ENCODE measurements at regions of chr12 and their contacts with region 1.

Region 1: GRCh38 chr12:22443379-22444316 is 100.7 kb downstream of the C2CD5 start:
- DNase-seq: peak in 1 of 2 donors; percentile 65
- ATAC-seq: peak; percentile 91 to 98 (median 95)
- H3K4me3 ChIP-seq: peak overlapping the region in 1 of 10 donors; percentile 4
- H3K27ac ChIP-seq: no peak overlapping the region
- H3K4me1 ChIP-seq: peaks cover 0 to 10% (median 0%) of the 10 kb centered on the region in 9 donors
- H3K27me3 ChIP-seq: no peaks in the 10 kb centered on the region
- CTCF ChIP-seq: peak; percentile 41 to 86 (median 73)

Region 2: DNA sequence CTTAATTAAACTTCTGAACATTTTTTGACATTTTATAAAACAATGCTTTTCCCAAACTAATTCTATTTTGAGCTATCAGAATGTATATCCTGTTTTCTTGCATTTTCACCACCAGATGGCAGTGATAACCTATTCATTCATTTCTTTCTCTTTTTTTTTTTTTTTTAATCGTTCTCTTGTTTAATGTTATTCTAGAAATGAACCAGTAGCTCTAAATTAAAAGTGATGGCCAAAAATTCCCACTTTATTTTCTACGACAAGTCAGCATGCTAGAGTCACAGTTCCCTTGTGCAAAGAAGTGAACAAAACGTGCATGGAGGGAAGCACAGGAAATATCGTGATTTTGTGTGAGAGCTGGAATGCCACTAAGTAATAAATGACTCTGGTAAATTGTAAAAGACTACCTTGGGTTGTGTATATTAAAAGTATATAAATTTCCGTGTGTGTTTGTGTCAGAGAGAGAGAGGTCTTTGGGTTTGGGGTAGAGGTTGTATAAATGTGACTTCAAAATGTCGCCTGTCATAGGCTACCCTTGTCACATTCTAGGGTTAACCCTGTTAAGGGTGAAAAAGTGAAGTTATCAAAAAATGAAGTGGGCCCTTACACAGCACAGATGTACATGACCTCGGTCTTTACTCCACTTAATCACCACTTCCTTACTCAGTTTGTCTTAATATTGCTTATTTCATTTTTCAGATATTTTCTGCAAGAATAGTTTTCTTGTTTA is 745.6 kb before region 1 on chr12:
- intact Hi-C with region 1: loop called in 2 of 10 experiments (anchors 10 kb)
- DNase-seq: no peak
- ATAC-seq: peak in 3 of 8 donors; percentile 25 to 62 (median 28)
- H3K4me3 ChIP-seq: peak overlapping the region in 5 of 10 donors; percentile 21 to 40 (median 29)
- H3K27ac ChIP-seq: peak overlapping the region in 2 of 10 donors; percentile 17 to 50
- H3K4me1 ChIP-seq: peaks cover 0 to 9% (median 4%) of the 10 kb centered on the region in 9 donors
- H3K27me3 ChIP-seq: no peaks in the 10 kb centered on the region
- CTCF ChIP-seq: peak; percentile 40 to 88 (median 73)

Region 3: GRCh38 chr12:22069856-22070565 is 373.6 kb before region 1 on chr12:
- intact Hi-C with region 1: loop called in 1 of 10 experiments (anchors 10 kb)
- DNase-seq: no peak
- ATAC-seq: no peak
- H3K4me3 ChIP-seq: no peak overlapping the region
- H3K27ac ChIP-seq: no peak overlapping the region
- H3K4me1 ChIP-seq: no peaks in the 10 kb centered on the region
- H3K27me3 ChIP-seq: no peaks in the 10 kb centered on the region
- CTCF ChIP-seq: no peak

Region 4: GRCh38 chr12:22083167-22083566 is 360.5 kb before region 1 on chr12:
- intact Hi-C with region 1: loop called in 8 of 10 experiments (anchors 1 to 10 kb)
- DNase-seq: no peak
- ATAC-seq: peak in 3 of 8 donors; percentile 38 to 42 (median 41)
- H3K4me3 ChIP-seq: no peak overlapping the region
- H3K27ac ChIP-seq: no peak overlapping the region
- H3K4me1 ChIP-seq: no peaks in the 10 kb centered on the region
- H3K27me3 ChIP-seq: no peaks in the 10 kb centered on the region
- CTCF ChIP-seq: peak in 8 of 9 donors; percentile 21 to 68 (median 58)

Region 5: GRCh38 chr12:22088886-22089285 is 354.8 kb before region 1 on chr12:
- intact Hi-C with region 1: loop called in 5 of 10 experiments (anchors 5 to 10 kb)
- DNase-seq: no peak
- ATAC-seq: no peak
- H3K4me3 ChIP-seq: no peak overlapping the region
- H3K27ac ChIP-seq: no peak overlapping the region
- H3K4me1 ChIP-seq: no peaks in the 10 kb centered on the region
- H3K27me3 ChIP-seq: no peaks in the 10 kb centered on the region
- CTCF ChIP-seq: no peak

Region 6: DNA sequence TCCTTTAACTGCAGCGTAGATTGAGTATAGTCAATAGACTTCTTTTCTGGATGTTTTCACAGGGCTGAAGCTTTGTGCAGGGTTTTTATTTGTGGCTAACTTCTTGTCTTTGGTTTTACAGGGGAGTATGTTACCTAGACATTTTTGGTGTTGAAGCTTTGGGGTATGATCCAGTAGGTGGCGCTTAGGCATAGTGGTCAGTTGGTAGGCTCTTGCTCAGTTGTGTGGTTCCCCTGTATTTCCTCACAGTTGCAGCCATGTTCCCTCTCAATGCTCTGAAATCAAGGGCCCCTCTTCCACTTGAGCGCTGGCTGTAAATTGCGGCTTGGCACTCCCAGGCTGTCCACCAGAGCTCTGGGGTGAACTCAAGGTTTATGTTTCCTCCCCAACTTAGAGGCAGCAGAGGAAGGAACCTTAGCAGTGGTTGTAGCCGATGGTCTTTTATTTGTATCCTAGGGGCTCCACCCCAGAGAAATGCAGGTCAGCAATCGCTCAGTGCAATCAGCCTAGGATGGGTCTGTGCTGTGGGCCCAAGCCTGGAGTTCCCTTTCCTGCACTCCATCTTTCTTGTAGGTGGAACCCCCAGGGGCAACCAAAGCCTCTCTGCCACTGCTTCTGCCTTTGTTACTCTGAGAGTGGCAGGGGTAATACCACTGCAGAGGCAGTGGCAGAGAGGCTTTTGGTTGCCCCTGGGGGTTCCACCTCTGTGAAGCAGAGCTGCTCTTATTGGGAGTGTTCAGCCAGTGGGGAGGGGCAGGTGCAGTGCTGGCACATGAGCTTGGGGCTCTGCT is 342.5 kb before region 1 on chr12:
- intact Hi-C with region 1: loop called in 4 of 10 experiments (anchors 1 to 5 kb)
- DNase-seq: peak in 1 of 2 donors; percentile 54
- ATAC-seq: peak; percentile 35 to 81 (median 54)
- H3K4me3 ChIP-seq: no peak overlapping the region
- H3K27ac ChIP-seq: no peak overlapping the region
- H3K4me1 ChIP-seq: peaks cover 0 to 9% (median 0%) of the 10 kb centered on the region in 9 donors
- H3K27me3 ChIP-seq: peaks cover 0 to 11% (median 3%) of the 10 kb centered on the region in 7 donors
- CTCF ChIP-seq: peak; percentile 15 to 67 (median 58)

Region 7: DNA sequence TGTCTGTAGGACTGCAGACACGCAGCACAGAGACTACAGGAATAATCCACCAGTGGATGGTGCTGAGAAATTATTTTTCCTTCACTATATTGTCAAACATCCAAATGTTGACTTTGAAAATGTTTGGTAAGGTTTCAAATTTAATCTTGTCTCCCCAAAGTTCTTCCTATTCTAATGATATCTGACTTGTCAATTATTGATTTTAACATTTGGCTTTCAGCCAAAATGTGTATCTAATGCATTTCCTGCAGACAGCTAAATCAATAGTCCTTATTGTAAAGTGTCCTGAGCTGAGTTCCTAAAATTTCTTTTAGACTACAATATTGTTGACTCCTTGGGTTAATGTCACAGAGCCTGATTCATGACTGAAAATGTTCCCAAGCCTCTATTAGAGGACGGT is 150.4 kb before region 1 on chr12:
- intact Hi-C with region 1: no loop called
- DNase-seq: no peak
- ATAC-seq: no peak
- H3K4me3 ChIP-seq: no peak overlapping the region
- H3K27ac ChIP-seq: no peak overlapping the region
- H3K4me1 ChIP-seq: peaks cover 0 to 6% (median 0%) of the 10 kb centered on the region in 9 donors
- H3K27me3 ChIP-seq: no peaks in the 10 kb centered on the region
- CTCF ChIP-seq: no peak

Region 8: DNA sequence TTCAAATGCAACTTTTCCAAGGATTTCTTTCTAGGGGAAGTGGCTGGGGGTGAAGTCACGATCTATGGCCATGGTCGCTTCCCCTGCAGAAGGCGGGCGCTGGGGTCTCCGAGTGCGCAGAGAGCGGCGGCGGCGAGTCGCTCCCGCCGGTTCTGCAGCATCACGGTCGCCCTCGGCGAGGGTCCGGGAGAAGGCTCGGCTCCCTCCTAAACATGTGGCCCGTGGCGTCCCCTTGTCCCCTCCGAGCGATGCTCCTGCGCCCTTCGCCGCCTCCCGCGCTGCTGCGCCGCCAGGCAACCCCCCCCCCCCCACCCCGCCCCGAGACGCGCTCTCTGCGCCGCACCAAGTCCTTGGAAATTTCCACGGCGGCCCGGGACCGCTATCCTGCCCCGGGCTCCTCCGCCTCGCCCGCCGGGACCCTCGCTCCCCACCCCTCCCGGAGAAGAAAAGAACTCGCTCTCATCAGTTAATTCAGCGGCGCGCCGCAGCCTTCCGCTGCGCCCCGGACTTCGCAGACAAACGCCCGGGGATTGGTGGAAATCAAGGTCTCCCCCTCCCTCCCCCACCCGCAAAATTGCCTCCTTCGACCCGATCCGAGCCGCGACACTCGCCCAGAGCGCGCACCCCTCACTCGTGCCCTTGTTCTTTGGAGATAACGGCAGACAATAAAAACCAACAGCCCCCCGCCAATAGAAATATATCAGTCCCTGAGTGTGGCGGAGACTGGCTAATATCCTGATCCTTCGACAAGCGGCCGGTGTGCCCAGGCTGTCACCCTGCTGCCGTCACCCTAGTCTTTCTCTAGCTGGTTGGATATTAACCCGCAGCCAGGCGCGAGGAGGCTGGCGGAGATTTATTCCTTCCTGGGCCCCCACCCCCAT is 109.0 kb before region 1 on chr12 and contains the start of gene ST8SIA1:
- intact Hi-C with region 1: loop called in 6 of 10 experiments (anchors 5 to 10 kb)
- DNase-seq: peak; percentile 29 to 50
- ATAC-seq: peak; percentile 55 to 66 (median 60)
- H3K4me3 ChIP-seq: peak within 1 kb of the TSS; percentile 52 to 72 (median 62)
- H3K27ac ChIP-seq: peak within 1 kb of the TSS in 9 of 10 donors; percentile 7 to 75 (median 54)
- H3K4me1 ChIP-seq: peaks cover 0 to 16% (median 6%) of the 10 kb centered on the region in 9 donors
- H3K27me3 ChIP-seq: peaks cover 0 to 46% (median 16%) of the 10 kb centered on the region in 7 donors
- CTCF ChIP-seq: no peak
- total RNA-seq, gene ST8SIA1: 1.0 to 4.9 (median 2.0) TPM

Region 9: DNA sequence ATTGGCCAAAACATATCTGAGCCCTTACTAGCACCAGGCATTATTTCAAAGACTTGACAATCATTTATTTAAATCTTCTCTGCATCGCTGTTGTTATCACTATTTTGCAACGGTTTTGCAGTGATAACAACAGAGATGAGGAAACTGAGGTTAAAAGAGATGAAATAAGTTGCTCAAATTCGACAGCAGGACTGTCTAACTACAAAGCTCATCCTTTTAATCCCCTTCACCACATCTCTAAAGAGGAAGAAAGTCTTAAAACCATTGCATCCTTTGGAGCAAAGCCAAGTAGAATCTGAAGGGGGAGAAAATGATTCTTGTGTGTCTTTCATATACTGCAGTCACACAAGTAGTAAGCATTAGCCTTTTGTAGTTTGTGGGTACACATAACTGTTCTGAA is 166.5 kb after region 1 on chr12:
- intact Hi-C with region 1: no loop called
- DNase-seq: no peak
- ATAC-seq: no peak
- H3K4me3 ChIP-seq: no peak overlapping the region
- H3K27ac ChIP-seq: no peak overlapping the region
- H3K4me1 ChIP-seq: no peaks in the 10 kb centered on the region
- H3K27me3 ChIP-seq: no peaks in the 10 kb centered on the region
- CTCF ChIP-seq: no peak

Measured in heart right ventricle (tissue), 16 donors.